ENCODE measurements at regions of chr11 and their contacts with region 1.

Region 1: GRCh38 chr11:80970037-80970436 is 1529.2 kb upstream of the TENM4 start:
- DNase-seq: no peak
- ATAC-seq: no peak
- H3K4me3 Mint-ChIP-seq: no peak overlapping the region
- H3K27ac Mint-ChIP-seq: no peak overlapping the region
- H3K4me1 Mint-ChIP-seq: no peaks in the 10 kb centered on the region
- H3K27me3 Mint-ChIP-seq: no peaks in the 10 kb centered on the region

Region 2: DNA sequence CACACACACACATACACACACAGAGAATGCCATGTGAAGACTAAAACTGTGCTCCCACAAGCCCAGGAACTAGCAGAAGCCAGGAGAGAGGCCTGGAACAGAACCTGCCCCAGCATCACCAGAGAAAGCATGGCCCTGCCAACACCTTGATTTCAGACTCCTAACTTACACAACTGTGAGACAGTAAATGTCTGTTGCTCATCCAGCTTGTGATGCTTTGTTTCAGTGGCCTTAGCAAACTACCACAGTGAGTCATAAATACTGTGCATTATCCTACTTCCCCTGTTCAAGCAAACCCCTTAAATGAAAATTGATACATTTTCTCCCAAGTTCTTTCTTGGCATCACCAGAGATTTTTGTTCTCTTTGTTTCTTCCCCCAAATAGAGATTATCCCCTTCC is 10.2 kb after region 1 on chr11:
- CTCF ChIA-PET with region 1: no interaction called
- POLR2A ChIA-PET with region 1: no interaction called
- intact Hi-C with region 1: loop called in 1 of 2 experiments (anchors 1 kb)
- DNase-seq: no peak
- ATAC-seq: no peak
- H3K4me3 Mint-ChIP-seq: no peak overlapping the region
- H3K27ac Mint-ChIP-seq: no peak overlapping the region
- H3K4me1 Mint-ChIP-seq: no peaks in the 10 kb centered on the region
- H3K27me3 Mint-ChIP-seq: no peaks in the 10 kb centered on the region